HepG2 (cell line): ENCODE measurements at regions of chr7 and their contacts with region 1.

Region 1: GRCh38 chr7:32588657-32589056 is 93.4 kb downstream of the AVL9 start:
- DNase-seq: peak; percentile 36
- ATAC-seq: no peak; the same call in 2 of the 3 replicates
- H3K4me3 ChIP-seq: no peak overlapping the region
- H3K27ac ChIP-seq: peak overlapping the region; percentile 75
- H3K4me1 ChIP-seq: peaks cover 39% of the 10 kb centered on the region
- H3K27me3 ChIP-seq: no peaks in the 10 kb centered on the region
- CTCF ChIP-seq: no peak
- EP300 ChIP-seq: no peak
- POLR2A ChIP-seq: no peak
- RAD21 ChIP-seq: no peak

Region 2: DNA sequence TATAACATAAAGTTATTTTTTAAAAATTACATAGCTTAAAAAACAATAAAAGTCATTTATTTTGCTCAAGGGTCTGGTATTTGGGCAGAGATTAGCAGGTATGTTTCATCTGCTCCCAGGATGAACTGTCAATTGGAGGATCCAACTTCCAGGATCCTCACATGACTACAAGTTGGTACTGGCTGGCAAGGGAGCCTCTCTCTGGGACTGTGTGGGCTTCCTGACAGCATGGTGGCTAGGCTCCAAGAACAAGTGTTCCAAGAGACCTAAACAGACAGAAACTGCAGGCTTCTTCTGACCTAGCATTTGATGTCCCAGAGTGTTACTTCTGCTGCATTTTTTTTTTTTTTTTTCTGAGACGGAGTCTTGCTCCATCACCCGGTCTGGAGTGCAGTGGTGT is 13.8 kb after region 1 on chr7:
- CTCF ChIA-PET with region 1: no interaction called
- POLR2A ChIA-PET with region 1: no interaction called
- in situ Hi-C with region 1: no loop called
- intact Hi-C with region 1: no loop called
- DNase-seq: no peak
- ATAC-seq: no peak
- H3K4me3 ChIP-seq: no peak overlapping the region
- H3K27ac ChIP-seq: no peak overlapping the region
- H3K4me1 ChIP-seq: no peaks in the 10 kb centered on the region
- H3K27me3 ChIP-seq: no peaks in the 10 kb centered on the region
- CTCF ChIP-seq: no peak
- EP300 ChIP-seq: no peak
- POLR2A ChIP-seq: no peak
- RAD21 ChIP-seq: no peak

Region 3: GRCh38 chr7:32670110-32671025 is 81.7 kb after region 1 on chr7:
- CTCF ChIA-PET with region 1: no interaction called
- POLR2A ChIA-PET with region 1: interaction called, 22 read pairs
- in situ Hi-C with region 1: no loop called
- intact Hi-C with region 1: loop called (anchors 2 kb)
- DNase-seq: peak; percentile 94
- ATAC-seq: peak; percentile 75
- H3K4me3 ChIP-seq: peak overlapping the region in 1 of 3 experiments; percentile 32; a peak in 1 of 6 replicates
- H3K27ac ChIP-seq: peak overlapping the region; percentile 97
- H3K4me1 ChIP-seq: peaks cover 70% of the 10 kb centered on the region
- H3K27me3 ChIP-seq: no peaks in the 10 kb centered on the region
- CTCF ChIP-seq: no peak
- EP300 ChIP-seq: peak; percentile 85 to 94
- POLR2A ChIP-seq: no peak
- RAD21 ChIP-seq: no peak